ENCODE measurements at regions of chr10 and their contacts with region 1.

Region 1: GRCh38 chr10:97743169-97743943 is 6.4 kb downstream of the ZFYVE27 start:
- DNase-seq: no peak
- ATAC-seq: peak in 1 of 2 experiments; percentile 37; a peak in 3 of 6 replicates
- H3K4me3 ChIP-seq: no peak overlapping the region
- H3K27ac ChIP-seq: no peak overlapping the region
- H3K4me1 ChIP-seq: peaks cover 3% of the 10 kb centered on the region; the same call in 2 of the 3 replicates
- CTCF ChIP-seq: no peak
- EP300 ChIP-seq: no peak
- POLR2A ChIP-seq: no peak
- RAD21 ChIP-seq: no peak

Region 2: GRCh38 chr10:97731346-97732051 is 11.9 kb before region 1 on chr10:
- CTCF ChIA-PET with region 1: interaction called, 19 read pairs
- POLR2A ChIA-PET with region 1: interaction called, 4 read pairs
- DNase-seq: peak; percentile 60 to 81
- ATAC-seq: peak; percentile 86 to 89
- H3K4me3 ChIP-seq: no peak overlapping the region
- H3K27ac ChIP-seq: peak overlapping the region in 1 of 2 experiments; percentile 26; a peak in 2 of 6 replicates
- H3K4me1 ChIP-seq: peaks cover 7% of the 10 kb centered on the region; the same call in 1 of the 3 replicates
- CTCF ChIP-seq: peak; percentile 97
- EP300 ChIP-seq: no peak
- POLR2A ChIP-seq: no peak
- RAD21 ChIP-seq: peak; percentile 97 to 98

Region 3: GRCh38 chr10:97759158-97759887 is 16.0 kb after region 1 on chr10:
- CTCF ChIA-PET with region 1: interaction called, 46 read pairs
- POLR2A ChIA-PET with region 1: no interaction called
- DNase-seq: peak; percentile 80 to 94
- ATAC-seq: peak; percentile 82 to 96
- H3K4me3 ChIP-seq: no peak overlapping the region
- H3K27ac ChIP-seq: no peak overlapping the region
- H3K4me1 ChIP-seq: no peaks in the 10 kb centered on the region
- CTCF ChIP-seq: peak; percentile 87
- EP300 ChIP-seq: no peak
- POLR2A ChIP-seq: no peak
- RAD21 ChIP-seq: peak; percentile 87 to 92

Measured in A549 (cell line).